ENCODE measurements at regions of chr15 and their contacts with region 1.

Region 1: GRCh38 chr15:75171408-75171807 is 30.3 kb upstream of the C15orf39 start:
- DNase-seq: peak; percentile 93
- ATAC-seq: peak; percentile 91
- H3K4me3 ChIP-seq: peak overlapping the region; percentile 27; the same call in 1 of the 2 replicates
- H3K27ac ChIP-seq: peak overlapping the region; percentile 95
- H3K4me1 ChIP-seq: peaks cover 65% of the 10 kb centered on the region
- H3K27me3 ChIP-seq: no peaks in the 10 kb centered on the region
- CTCF ChIP-seq: no peak

Region 2: DNA sequence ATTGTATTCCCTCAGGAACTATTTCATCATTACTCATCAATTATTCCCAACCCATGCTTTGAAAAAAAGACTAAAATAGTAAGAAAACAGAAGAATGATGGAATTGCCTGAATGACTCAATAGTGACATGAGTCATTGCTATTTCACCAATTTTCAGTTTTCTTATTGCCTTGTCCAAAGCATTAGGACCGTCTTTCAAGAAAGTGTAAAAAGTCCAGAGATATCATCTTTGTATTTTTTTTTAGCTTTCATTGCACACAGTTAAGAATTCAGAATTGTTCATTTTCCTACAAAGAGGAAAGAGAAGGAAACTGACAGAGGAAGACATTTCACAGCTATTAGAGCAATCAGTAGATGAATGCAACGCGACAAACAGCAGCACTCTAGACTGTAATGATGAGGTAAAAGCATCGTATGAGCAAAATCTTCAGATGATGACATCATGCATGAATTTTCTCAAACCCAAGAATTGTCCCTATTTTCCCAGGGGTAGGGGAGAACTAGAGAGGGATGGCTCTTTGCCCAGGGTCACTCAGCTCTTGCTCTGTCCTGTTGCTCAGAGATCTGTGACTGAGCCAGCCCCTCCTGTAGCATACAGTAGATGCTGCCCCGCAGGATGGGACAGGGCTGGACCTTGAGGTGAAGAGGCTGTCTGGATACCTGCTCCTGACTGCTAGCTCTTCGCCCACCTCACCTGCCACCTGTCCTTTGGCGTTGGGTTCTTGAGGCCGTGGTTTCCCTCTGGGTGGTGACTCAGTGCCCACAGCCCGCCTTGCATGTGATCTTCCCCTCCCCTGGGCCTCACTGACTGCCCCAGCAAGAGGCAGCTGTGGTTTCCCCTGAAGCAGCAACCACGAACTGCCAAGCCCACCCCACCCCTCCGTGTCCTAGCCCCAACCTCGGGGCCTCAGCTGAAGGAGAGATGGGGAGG is 63.2 kb before region 1 on chr15:
- CTCF ChIA-PET with region 1: no interaction called
- POLR2A ChIA-PET with region 1: no interaction called
- intact Hi-C with region 1: no loop called
- DNase-seq: peak; percentile 91
- ATAC-seq: peak; percentile 43
- H3K4me3 ChIP-seq: peak overlapping the region; percentile 39; the same call in 1 of the 2 replicates
- H3K27ac ChIP-seq: peak overlapping the region; percentile 87
- H3K4me1 ChIP-seq: peaks cover 44% of the 10 kb centered on the region
- H3K27me3 ChIP-seq: no peaks in the 10 kb centered on the region
- CTCF ChIP-seq: no peak

Region 3: DNA sequence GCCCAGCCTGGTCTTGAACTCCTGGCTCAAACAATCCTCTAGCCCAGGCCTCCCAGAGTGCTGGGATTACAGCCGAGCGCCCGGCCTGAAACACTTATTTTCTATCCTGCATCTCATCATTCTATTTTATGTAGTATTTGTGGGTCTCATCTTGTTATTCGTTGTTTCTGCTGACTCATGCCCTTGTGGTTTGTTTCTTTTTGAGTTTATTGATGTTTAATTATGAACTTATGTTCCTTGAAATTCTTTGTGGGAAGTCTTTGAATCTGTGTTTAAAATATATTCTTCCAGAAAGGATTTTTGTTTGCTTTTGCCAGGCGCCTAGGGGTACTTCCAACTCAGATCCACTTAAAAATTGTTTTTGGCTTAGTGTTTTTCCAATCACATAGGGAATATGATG is 48.0 kb before region 1 on chr15:
- CTCF ChIA-PET with region 1: no interaction called
- POLR2A ChIA-PET with region 1: no interaction called
- intact Hi-C with region 1: loop called (anchors 2 kb)
- DNase-seq: peak; percentile 83
- ATAC-seq: peak; percentile 72
- H3K4me3 ChIP-seq: no peak overlapping the region
- H3K27ac ChIP-seq: peak overlapping the region; percentile 85
- H3K4me1 ChIP-seq: peaks cover 37% of the 10 kb centered on the region
- H3K27me3 ChIP-seq: no peaks in the 10 kb centered on the region
- CTCF ChIP-seq: no peak

Region 4: DNA sequence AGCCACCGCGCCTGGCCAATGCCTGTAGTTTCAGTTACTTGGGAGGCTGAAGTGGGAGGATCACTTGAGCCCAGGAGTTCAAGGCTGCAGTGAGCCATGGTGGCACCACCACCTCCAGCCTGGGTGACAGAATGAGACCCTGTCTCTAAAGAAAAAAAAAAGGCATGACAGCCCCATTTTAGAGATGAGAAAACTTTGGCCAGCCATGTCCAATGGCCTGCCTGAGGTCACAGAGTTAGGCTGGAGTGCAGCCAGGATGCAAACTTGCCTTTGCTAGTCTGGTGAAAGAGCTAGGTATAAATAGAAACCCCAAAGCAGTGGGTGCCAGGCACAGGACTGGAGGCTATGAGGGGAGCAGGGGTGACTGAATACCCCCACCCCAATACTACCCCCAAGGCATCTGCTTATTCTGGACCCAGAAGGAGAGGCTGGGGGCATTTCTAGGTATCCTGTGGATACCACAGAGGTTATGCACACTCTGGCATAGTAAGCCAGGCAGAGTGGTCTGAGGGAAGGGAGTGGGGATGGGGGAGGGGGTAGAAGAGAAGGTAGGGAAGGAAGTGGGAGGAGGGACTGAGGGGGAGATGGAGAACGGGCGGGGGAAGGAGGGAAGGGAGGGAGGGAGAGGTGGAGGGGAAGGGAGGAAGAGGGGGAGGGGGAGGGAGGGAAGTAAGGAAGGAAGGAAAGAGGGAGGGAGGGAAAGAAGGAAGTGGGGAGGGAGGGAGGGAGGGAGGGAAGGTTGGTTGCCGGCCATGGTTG is 14.0 kb after region 1 on chr15:
- CTCF ChIA-PET with region 1: no interaction called
- POLR2A ChIA-PET with region 1: no interaction called
- intact Hi-C with region 1: no loop called
- DNase-seq: no peak
- ATAC-seq: no peak
- H3K4me3 ChIP-seq: no peak overlapping the region
- H3K27ac ChIP-seq: no peak overlapping the region
- H3K4me1 ChIP-seq: peaks cover 4% of the 10 kb centered on the region
- H3K27me3 ChIP-seq: no peaks in the 10 kb centered on the region
- CTCF ChIP-seq: no peak

Region 5: DNA sequence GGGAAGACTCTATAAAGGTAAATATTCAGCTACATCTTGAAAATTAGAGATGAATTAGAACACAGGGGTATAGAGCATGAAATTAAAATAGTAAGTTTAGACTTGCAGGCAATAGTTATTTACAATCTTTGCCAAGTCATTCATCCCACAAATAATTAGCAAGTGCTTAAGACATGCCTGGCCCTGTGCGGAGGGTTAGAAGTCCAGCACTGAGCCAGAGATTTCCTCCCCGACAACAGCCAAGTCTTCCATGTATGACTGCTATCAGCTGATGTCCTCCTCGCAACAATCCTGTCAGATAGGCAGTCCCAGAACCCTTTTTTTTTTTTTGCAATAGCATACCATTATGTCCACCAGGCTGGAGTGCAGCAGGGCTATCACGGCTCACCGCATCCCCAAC is 265.5 kb after region 1 on chr15:
- CTCF ChIA-PET with region 1: no interaction called
- POLR2A ChIA-PET with region 1: no interaction called
- intact Hi-C with region 1: no loop called
- DNase-seq: no peak
- ATAC-seq: no peak
- H3K4me3 ChIP-seq: no peak overlapping the region
- H3K27ac ChIP-seq: no peak overlapping the region
- H3K4me1 ChIP-seq: no peaks in the 10 kb centered on the region
- H3K27me3 ChIP-seq: no peaks in the 10 kb centered on the region
- CTCF ChIP-seq: no peak

Region 6: GRCh38 chr15:75565062-75565970 is 393.9 kb after region 1 on chr15:
- CTCF ChIA-PET with region 1: no interaction called
- POLR2A ChIA-PET with region 1: no interaction called
- intact Hi-C with region 1: no loop called
- DNase-seq: no peak
- ATAC-seq: no peak
- H3K4me3 ChIP-seq: no peak overlapping the region
- H3K27ac ChIP-seq: no peak overlapping the region
- H3K4me1 ChIP-seq: no peaks in the 10 kb centered on the region
- H3K27me3 ChIP-seq: no peaks in the 10 kb centered on the region
- CTCF ChIP-seq: no peak

Measured in PC-3 (cell line).